G401 (cell line): ENCODE measurements at regions of chr3 and their contacts with region 1.

Region 1: GRCh38 chr3:66822186-66823008 is 175.7 kb upstream of the KBTBD8 start:
- DNase-seq: peak; percentile 72

Region 2: DNA sequence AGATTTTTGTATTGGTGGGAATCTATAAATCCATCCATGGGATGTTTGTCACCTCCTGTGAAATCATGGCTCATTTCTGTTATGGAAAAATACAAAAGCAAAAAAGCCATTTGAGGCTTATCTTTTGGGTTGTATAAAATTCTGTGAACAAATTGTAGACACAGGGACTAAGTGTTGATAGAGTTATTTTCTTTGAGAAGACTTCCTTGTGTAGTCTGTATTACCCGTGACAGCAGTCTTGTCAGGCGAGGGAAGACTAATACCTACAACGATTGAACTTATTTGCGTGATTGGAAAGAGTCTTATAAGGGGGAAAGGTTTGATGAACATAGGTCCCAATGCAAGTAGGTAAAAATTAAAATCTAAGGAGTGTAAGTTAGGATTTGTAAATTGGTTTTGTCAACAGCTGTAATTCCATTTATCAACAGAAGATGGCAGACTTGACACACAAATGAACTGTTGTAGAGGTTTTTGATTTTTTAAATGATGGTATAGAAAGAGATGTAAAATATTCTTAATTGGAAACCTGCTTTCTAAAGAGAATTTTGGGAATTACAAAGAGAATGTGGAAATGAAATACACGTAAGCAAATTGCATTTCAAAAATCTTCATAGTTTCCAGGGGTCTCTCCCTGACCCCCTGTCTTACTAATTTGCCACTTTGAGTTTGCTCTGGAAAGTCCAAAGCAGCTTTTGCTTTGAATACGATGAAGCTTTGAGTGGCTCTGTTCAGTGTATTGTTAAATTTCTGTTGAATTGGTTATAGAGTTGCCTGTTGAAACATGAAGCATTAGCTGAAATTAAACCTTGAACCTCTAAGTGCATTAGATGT is 568.4 kb before region 1 on chr3:
- in situ Hi-C with region 1: loop called (anchors 25 kb)
- DNase-seq: peak; percentile 54